Posterior vena cava (tissue), 2 donors: ENCODE measurements at regions of chr4 and their contacts with region 1.

Region 1: DNA sequence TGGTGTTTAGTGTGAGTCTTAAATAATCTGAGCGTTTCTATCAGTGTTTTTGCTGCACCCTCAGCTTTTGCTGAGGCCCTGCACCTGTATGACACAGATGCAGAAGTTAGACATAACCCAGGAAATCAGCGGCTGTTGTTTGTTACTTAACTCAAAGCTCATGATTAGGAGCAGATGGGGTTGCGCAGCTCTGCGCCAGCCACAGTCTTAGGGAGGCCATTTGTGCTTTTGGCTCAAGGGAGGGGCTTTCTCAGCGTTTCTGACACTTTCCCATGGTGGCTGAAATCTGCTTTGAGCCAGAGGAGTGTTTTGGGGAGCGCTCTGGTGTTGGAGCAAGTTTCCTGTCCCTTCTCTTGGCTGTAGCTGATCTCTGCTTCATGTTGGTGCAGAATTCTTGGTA is 433.8 kb downstream of the NAF1 start:
- DNase-seq: no peak

Region 2: DNA sequence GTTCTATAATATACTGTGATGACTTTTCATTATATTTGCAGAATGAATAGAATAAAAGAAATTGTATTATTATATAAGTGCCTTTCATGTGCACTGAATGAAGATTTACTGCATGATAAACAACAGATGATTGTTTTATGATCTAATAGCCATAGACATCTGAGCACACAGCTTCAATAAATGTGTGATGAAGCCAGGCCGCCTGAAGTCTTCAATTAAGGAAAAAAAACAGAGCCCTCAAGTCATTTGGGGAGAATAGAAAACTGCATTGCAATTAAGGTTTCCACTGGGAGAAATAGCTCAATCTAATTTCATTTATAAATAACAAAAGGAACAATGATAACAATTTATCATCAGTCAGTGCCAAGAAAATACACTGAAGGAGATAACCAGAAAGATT is 1524.3 kb before region 1 on chr4:
- intact Hi-C with region 1: loop called in 1 of 2 experiments (anchors 10 kb)
- DNase-seq: no peak